GM12878 (cell line): ENCODE measurements at regions of chr3 and their contacts with region 1.

Region 1: GRCh38 chr3:111717601-111718000 is 122.5 kb upstream of the ZBED2 start:
- DNase-seq: no peak
- ATAC-seq: peak; percentile 99
- H3K4me3 ChIP-seq: no peak overlapping the region
- H3K27ac ChIP-seq: no peak overlapping the region
- H3K4me1 ChIP-seq: no peaks in the 10 kb centered on the region
- H3K27me3 ChIP-seq: no peaks in the 10 kb centered on the region
- CTCF ChIP-seq: peak; percentile 87 to 95 (median 92)
- EP300 ChIP-seq: no peak
- POLR2A ChIP-seq: no peak
- RAD21 ChIP-seq: peak; percentile 98

Region 2: GRCh38 chr3:111668912-111669488 is 48.6 kb before region 1 on chr3:
- CTCF ChIA-PET with region 1: interaction called, 19 read pairs
- POLR2A ChIA-PET with region 1: interaction called, 4 read pairs
- RAD21 ChIA-PET with region 1: interaction called, 110 read pairs
- SMC1A ChIA-PET with region 1: interaction called, 8 read pairs
- in situ Hi-C with region 1: no loop called
- intact Hi-C with region 1: loop called (anchors 1 kb)
- DNase-seq: no peak
- ATAC-seq: peak; percentile 88
- H3K4me3 ChIP-seq: no peak overlapping the region
- H3K27ac ChIP-seq: no peak overlapping the region
- H3K4me1 ChIP-seq: peaks cover 8% of the 10 kb centered on the region; the same call in 1 of the 2 replicates
- H3K27me3 ChIP-seq: no peaks in the 10 kb centered on the region
- CTCF ChIP-seq: peak; percentile 69 to 79 (median 76)
- EP300 ChIP-seq: no peak
- POLR2A ChIP-seq: no peak
- RAD21 ChIP-seq: peak; percentile 84

Region 3: GRCh38 chr3:111691293-111691909 is 26.2 kb before region 1 on chr3:
- CTCF ChIA-PET with region 1: interaction called, 68 read pairs
- POLR2A ChIA-PET with region 1: interaction called, 3 read pairs
- RAD21 ChIA-PET with region 1: interaction called, 40 read pairs
- SMC1A ChIA-PET with region 1: interaction called, 59 read pairs
- in situ Hi-C with region 1: no loop called
- intact Hi-C with region 1: no loop called
- DNase-seq: no peak
- ATAC-seq: peak; percentile 63
- H3K4me3 ChIP-seq: no peak overlapping the region
- H3K27ac ChIP-seq: no peak overlapping the region
- H3K4me1 ChIP-seq: peaks cover 6% of the 10 kb centered on the region; the same call in 1 of the 2 replicates
- H3K27me3 ChIP-seq: no peaks in the 10 kb centered on the region
- CTCF ChIP-seq: peak; percentile 24 to 44 (median 31); a peak in 4 of 6 replicates
- EP300 ChIP-seq: no peak
- POLR2A ChIP-seq: no peak
- RAD21 ChIP-seq: peak; percentile 52

Region 4: GRCh38 chr3:111761309-111761831 is 43.8 kb after region 1 on chr3:
- CTCF ChIA-PET with region 1: interaction called, 4 read pairs
- POLR2A ChIA-PET with region 1: no interaction called
- RAD21 ChIA-PET with region 1: interaction called, 15 read pairs
- SMC1A ChIA-PET with region 1: interaction called, 15 read pairs
- in situ Hi-C with region 1: no loop called
- intact Hi-C with region 1: no loop called
- DNase-seq: no peak
- ATAC-seq: peak; percentile 75
- H3K4me3 ChIP-seq: no peak overlapping the region
- H3K27ac ChIP-seq: no peak overlapping the region
- H3K4me1 ChIP-seq: no peaks in the 10 kb centered on the region
- H3K27me3 ChIP-seq: no peaks in the 10 kb centered on the region
- CTCF ChIP-seq: no peak
- EP300 ChIP-seq: no peak; a peak in 1 of 4 replicates
- POLR2A ChIP-seq: no peak
- RAD21 ChIP-seq: no peak

Region 5: GRCh38 chr3:111787556-111788463 is 70.2 kb after region 1 on chr3:
- CTCF ChIA-PET with region 1: no interaction called
- POLR2A ChIA-PET with region 1: no interaction called
- RAD21 ChIA-PET with region 1: no interaction called
- SMC1A ChIA-PET with region 1: no interaction called
- in situ Hi-C with region 1: no loop called
- intact Hi-C with region 1: no loop called
- DNase-seq: no peak
- ATAC-seq: no peak
- H3K4me3 ChIP-seq: no peak overlapping the region
- H3K27ac ChIP-seq: no peak overlapping the region
- H3K4me1 ChIP-seq: no peaks in the 10 kb centered on the region
- H3K27me3 ChIP-seq: no peaks in the 10 kb centered on the region
- CTCF ChIP-seq: no peak
- EP300 ChIP-seq: no peak
- POLR2A ChIP-seq: no peak
- RAD21 ChIP-seq: no peak

Region 6: GRCh38 chr3:111904376-111905241 is 187.0 kb after region 1 on chr3:
- CTCF ChIA-PET with region 1: interaction called, 11 read pairs
- POLR2A ChIA-PET with region 1: no interaction called
- RAD21 ChIA-PET with region 1: no interaction called
- SMC1A ChIA-PET with region 1: no interaction called
- in situ Hi-C with region 1: no loop called
- intact Hi-C with region 1: no loop called
- DNase-seq: no peak
- ATAC-seq: no peak
- H3K4me3 ChIP-seq: no peak overlapping the region
- H3K27ac ChIP-seq: no peak overlapping the region
- H3K4me1 ChIP-seq: no peaks in the 10 kb centered on the region
- H3K27me3 ChIP-seq: no peaks in the 10 kb centered on the region
- CTCF ChIP-seq: no peak
- EP300 ChIP-seq: no peak
- POLR2A ChIP-seq: no peak
- RAD21 ChIP-seq: no peak

Region 7: GRCh38 chr3:111989061-111989678 is 271.6 kb after region 1 on chr3:
- CTCF ChIA-PET with region 1: interaction called, 23 read pairs
- POLR2A ChIA-PET with region 1: no interaction called
- RAD21 ChIA-PET with region 1: interaction called, 11 read pairs
- SMC1A ChIA-PET with region 1: interaction called, 14 read pairs
- in situ Hi-C with region 1: no loop called
- intact Hi-C with region 1: no loop called
- DNase-seq: no peak
- ATAC-seq: peak; percentile 96
- H3K4me3 ChIP-seq: no peak overlapping the region
- H3K27ac ChIP-seq: no peak overlapping the region
- H3K4me1 ChIP-seq: no peaks in the 10 kb centered on the region
- H3K27me3 ChIP-seq: no peaks in the 10 kb centered on the region
- CTCF ChIP-seq: peak; percentile 57 to 73 (median 68)
- EP300 ChIP-seq: no peak
- POLR2A ChIP-seq: no peak
- RAD21 ChIP-seq: peak; percentile 65

Region 8: DNA sequence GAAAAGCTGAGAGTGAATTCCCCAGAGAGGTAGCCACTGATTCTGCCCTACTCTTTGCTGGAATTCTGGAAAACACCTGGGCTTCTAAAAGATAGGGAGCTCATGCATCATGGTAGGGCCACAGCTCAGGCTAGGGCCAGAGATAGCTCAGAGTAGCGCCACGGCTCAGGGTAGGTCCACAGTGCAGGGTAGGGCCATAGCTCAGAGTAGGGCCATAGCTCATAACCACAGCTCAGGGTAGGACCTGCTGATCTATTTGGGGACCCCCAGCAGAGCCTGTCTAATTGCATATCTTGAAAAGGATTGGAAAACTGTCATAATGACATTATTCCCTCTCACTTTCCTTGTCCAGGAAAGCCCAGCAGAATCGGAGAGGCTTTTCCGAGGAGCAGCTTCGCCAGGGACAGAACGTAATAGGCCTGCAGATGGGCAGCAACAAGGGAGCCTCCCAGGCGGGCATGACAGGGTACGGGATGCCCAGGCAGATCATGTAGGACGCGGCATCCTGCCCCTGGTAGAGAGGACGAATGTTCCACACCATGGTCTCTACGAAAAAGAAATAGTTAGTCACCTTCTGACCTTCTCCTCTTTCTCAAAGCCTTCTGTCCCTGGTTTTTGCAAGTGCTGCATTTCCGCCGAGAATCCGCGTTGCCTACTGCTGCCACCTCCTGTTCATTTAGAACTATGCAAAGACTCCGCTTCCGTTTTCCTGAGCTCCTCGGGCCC is 295.6 kb after region 1 on chr3:
- CTCF ChIA-PET with region 1: interaction called, 161 read pairs
- POLR2A ChIA-PET with region 1: no interaction called
- RAD21 ChIA-PET with region 1: interaction called, 64 read pairs
- SMC1A ChIA-PET with region 1: interaction called, 123 read pairs
- in situ Hi-C with region 1: no loop called
- intact Hi-C with region 1: loop called (anchors 1 kb)
- DNase-seq: no peak
- ATAC-seq: peak; percentile 94
- H3K4me3 ChIP-seq: no peak overlapping the region
- H3K27ac ChIP-seq: no peak overlapping the region
- H3K4me1 ChIP-seq: no peaks in the 10 kb centered on the region
- H3K27me3 ChIP-seq: no peaks in the 10 kb centered on the region; a peak in 1 of 4 replicates
- CTCF ChIP-seq: peak; percentile 70 to 80 (median 72)
- EP300 ChIP-seq: no peak
- POLR2A ChIP-seq: no peak
- RAD21 ChIP-seq: peak; percentile 81